Heart left ventricle (tissue), 16 donors: ENCODE measurements at regions of chr2 and their contacts with region 1.

Region 1: GRCh38 chr2:25606892-25607291 is 66.5 kb downstream of the DTNB start:
- DNase-seq: no peak
- ATAC-seq: no peak
- H3K4me3 ChIP-seq: no peak overlapping the region
- H3K27ac ChIP-seq: no peak overlapping the region
- H3K4me1 ChIP-seq: no peaks in the 10 kb centered on the region
- H3K27me3 ChIP-seq: no peaks in the 10 kb centered on the region
- CTCF ChIP-seq: peak; percentile 41 to 78 (median 64)
- POLR2A ChIP-seq: no peak

Region 2: DNA sequence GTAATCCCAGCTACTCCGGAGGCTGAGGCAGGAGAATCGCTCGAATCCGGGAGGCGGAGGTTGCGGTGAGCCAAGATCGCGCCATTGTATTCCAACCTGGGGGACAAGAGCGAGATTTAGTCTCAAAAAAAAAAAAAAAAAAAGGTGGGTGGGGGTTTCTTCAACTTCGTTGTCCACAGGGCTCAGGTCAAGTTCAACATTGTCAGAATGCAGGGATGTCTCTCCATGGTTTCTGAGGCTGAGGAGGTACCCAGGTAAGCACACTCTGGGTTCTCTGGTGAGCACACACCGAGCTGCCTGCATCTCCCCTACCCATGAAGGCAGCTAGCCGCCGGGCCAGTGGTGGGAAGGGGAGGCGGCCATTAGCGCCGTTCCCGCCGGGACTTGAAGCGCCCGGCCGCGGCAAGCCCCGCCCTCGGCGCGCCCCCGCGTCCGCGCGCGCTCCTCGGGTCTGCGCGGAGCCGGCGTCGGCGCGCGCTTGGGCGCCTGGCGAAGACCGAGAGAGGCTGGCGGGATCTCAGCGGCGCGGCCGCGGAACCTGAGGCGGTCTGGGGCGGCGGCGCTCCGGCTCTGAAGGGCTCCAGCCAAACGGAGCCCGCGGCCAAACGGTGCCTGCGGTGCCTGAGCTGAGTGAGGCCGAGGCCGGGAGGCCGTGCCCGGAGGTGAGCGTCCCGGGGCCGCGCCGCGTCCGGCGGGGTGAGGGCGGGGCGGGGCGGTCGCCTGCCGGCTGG is 1666.7 kb before region 1 on chr2 and contains the start of gene UBXN2A:
- intact Hi-C with region 1: no loop called
- DNase-seq: peak; percentile 75 to 90 (median 82)
- ATAC-seq: peak; percentile 78 to 96 (median 93)
- H3K4me3 ChIP-seq: peak within 1 kb of the TSS; percentile 62 to 97 (median 82)
- H3K27ac ChIP-seq: peak within 1 kb of the TSS; percentile 84 to 97 (median 92)
- H3K4me1 ChIP-seq: peaks cover 0 to 31% (median 24%) of the 10 kb centered on the region in 12 donors
- H3K27me3 ChIP-seq: no peaks in the 10 kb centered on the region
- CTCF ChIP-seq: no peak
- POLR2A ChIP-seq: peak in 1 of 2 donors; percentile 57
- total RNA-seq, gene UBXN2A: 15.8 to 24.0 (median 19.6) TPM

Region 3: GRCh38 chr2:25651071-25651470 is 44.2 kb after region 1 on chr2:
- intact Hi-C with region 1: loop called in 1 of 10 experiments (anchors 10 kb)
- DNase-seq: no peak
- ATAC-seq: no peak
- H3K4me3 ChIP-seq: no peak overlapping the region
- H3K27ac ChIP-seq: peak overlapping the region in 1 of 12 donors; percentile 94
- H3K4me1 ChIP-seq: peaks cover 0 to 29% (median 0%) of the 10 kb centered on the region in 12 donors
- H3K27me3 ChIP-seq: no peaks in the 10 kb centered on the region
- CTCF ChIP-seq: no peak
- POLR2A ChIP-seq: no peak

Region 4: DNA sequence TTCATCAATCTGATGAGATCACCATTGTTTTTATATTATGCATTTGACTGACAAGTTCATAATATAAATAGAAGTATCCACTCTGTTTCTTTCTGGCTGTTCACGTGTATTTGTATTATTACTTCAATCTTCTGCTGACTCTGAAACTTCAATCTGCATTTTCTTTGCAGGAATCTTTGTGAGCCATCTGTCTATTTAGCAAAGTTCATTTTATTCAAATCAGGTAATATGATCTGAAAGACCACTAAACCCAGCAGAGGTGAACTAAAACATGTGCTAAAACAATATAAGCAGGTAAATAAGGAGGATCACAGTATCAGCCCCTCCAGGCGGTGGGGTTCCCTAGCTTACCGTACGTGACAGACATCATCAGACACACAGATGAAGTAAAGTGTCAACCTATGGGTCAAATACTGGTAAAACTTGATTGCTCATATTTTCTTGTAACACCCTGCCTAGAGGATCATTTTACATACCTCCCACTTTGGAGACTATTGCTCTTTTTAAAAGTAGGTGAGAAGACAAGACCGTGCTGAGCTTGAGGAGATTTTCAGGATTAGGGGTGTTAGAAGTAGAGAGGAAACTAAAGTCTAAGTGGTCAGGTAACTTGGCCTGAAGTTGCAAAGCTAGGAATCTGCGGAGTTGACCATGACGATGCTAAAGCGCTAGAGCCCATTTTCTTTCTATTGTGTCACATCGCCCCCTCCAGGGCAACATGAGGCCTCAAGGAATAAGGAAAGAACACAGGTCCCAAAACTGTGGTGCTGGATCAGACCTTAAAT is 57.5 kb after region 1 on chr2:
- intact Hi-C with region 1: loop called (anchors 1 to 10 kb)
- DNase-seq: peak in 4 of 5 donors; percentile 42 to 53 (median 50)
- ATAC-seq: peak; percentile 42 to 86 (median 79)
- H3K4me3 ChIP-seq: peak overlapping the region in 1 of 12 donors; percentile 10
- H3K27ac ChIP-seq: no peak overlapping the region
- H3K4me1 ChIP-seq: peaks cover 0 to 9% (median 0%) of the 10 kb centered on the region in 12 donors
- H3K27me3 ChIP-seq: no peaks in the 10 kb centered on the region
- CTCF ChIP-seq: peak; percentile 39 to 84 (median 69)
- POLR2A ChIP-seq: no peak

Region 5: DNA sequence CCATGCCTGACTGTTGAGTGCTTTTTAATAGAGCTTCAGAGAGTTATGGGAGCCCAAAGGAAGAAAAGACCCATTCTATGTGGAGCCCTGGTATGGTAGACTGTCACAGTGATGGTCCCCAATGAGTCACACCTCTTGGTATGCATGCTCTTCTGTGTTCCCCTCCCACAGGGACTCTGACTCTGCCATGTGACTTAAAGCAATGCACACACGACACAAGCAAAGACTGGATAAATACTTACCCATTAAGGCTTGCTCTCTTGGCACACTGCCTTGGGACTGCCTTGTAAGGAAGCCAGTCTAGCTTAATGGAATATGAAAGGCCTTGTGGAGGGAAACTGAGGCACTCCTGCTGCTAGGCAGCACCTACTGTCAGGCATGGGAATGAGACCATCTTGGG is 83.2 kb after region 1 on chr2:
- intact Hi-C with region 1: loop called in 2 of 10 experiments (anchors 10 kb)
- DNase-seq: no peak
- ATAC-seq: no peak
- H3K4me3 ChIP-seq: no peak overlapping the region
- H3K27ac ChIP-seq: no peak overlapping the region
- H3K4me1 ChIP-seq: peaks cover 0 to 2% (median 0%) of the 10 kb centered on the region in 12 donors
- H3K27me3 ChIP-seq: no peaks in the 10 kb centered on the region
- CTCF ChIP-seq: no peak
- POLR2A ChIP-seq: no peak

Region 6: DNA sequence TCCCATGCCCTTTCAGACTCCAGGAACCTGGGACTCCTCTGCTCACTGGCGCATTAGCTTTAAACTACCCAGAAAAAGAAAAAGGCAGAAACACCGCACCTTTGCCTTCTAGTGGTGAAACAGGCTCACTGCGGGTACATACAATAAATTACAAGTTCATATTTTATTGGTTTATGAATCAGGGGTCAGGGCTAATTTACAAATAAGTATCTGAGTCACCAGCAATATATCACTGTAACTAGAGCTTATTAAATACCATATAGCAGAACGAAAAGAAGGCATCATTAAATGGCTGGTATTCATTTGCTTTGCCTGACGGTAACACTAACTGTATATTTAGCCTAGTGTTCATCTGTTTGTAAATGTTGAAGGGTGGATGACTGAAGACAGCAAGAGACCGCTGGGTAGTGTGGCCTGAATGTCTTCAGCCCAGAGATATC is 93.3 kb after region 1 on chr2:
- intact Hi-C with region 1: loop called in 3 of 10 experiments (anchors 5 to 10 kb)
- DNase-seq: no peak
- ATAC-seq: no peak
- H3K4me3 ChIP-seq: no peak overlapping the region
- H3K27ac ChIP-seq: no peak overlapping the region
- H3K4me1 ChIP-seq: no peaks in the 10 kb centered on the region
- H3K27me3 ChIP-seq: no peaks in the 10 kb centered on the region
- CTCF ChIP-seq: peak; percentile 50 to 74 (median 63)
- POLR2A ChIP-seq: no peak

Region 7: DNA sequence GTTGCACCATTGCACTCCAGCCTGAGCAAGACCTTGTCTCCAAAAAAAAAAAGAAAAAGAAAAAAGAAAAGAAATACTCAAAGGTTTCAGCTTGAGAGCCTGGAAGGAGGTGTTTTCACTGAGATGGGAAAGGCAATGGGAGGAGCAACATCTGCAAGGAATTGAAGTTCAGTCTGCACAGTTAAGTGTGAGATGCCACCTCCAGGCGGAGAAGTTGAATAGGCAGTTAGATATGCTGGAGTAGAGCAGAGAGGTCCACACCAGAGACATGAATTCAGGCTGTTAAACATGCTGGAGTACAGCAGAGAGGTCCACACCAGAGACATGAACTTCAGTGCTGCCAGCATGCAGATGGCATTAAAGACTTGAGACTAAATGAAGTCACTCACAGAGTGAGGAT is 107.8 kb after region 1 on chr2:
- intact Hi-C with region 1: no loop called
- DNase-seq: no peak
- ATAC-seq: no peak
- H3K4me3 ChIP-seq: no peak overlapping the region
- H3K27ac ChIP-seq: no peak overlapping the region
- H3K4me1 ChIP-seq: peaks cover 0 to 12% (median 0%) of the 10 kb centered on the region in 12 donors
- H3K27me3 ChIP-seq: peaks cover 0 to 5% (median 0%) of the 10 kb centered on the region in 9 donors
- CTCF ChIP-seq: no peak
- POLR2A ChIP-seq: no peak